ENCODE measurements at regions of chr20 and their contacts with region 1.

Region 1: GRCh38 chr20:12970372-12970821 is 38.4 kb upstream of the SPTLC3 start:
- DNase-seq: peak; percentile 32
- H3K4me3 ChIP-seq: no peak overlapping the region
- H3K27ac ChIP-seq: no peak overlapping the region
- H3K4me1 ChIP-seq: peaks cover 14% of the 10 kb centered on the region
- H3K27me3 ChIP-seq: no peaks in the 10 kb centered on the region
- CTCF ChIP-seq: peak; percentile 61 to 63

Region 2: DNA sequence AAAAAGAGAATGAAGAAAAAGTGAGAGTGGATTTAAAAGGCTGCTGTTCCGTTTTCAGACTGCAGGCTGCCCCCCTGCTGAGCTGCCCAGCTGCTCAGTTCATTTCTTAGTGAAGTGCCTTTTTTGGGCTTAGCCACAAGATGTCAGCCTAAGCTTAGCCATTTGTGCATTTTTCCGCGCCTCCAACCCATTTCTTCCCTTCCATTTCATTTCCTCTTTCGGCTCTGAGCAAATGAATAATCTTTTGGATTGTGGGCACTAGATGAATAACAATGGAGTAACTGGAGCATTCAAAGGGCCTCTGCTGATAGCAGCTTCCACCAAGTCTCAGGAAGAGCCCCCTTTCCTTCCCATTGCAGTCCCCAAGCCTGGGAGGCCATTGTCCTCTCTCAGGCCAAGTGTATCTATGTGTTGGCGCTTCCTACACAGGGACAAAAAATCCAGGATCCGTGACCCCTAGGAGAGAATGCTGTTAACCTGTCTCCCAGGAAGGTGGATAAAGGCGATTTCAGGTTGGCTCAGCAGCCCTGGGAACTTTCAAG is 45.1 kb before region 1 on chr20:
- CTCF ChIA-PET with region 1: interaction called, 8 read pairs
- dilution Hi-C with region 1: no loop called
- in situ Hi-C with region 1: loop called (anchors 5 kb)
- intact Hi-C with region 1: loop called (anchors 1 kb)
- DNase-seq: peak; percentile 73
- H3K4me3 ChIP-seq: no peak overlapping the region
- H3K27ac ChIP-seq: no peak overlapping the region
- H3K4me1 ChIP-seq: peaks cover 31% of the 10 kb centered on the region
- H3K27me3 ChIP-seq: no peaks in the 10 kb centered on the region
- CTCF ChIP-seq: peak; percentile 86 to 98

Region 3: GRCh38 chr20:13029687-13030510 is 59.5 kb after region 1 on chr20:
- CTCF ChIA-PET with region 1: no interaction called
- dilution Hi-C with region 1: loop called (anchors 5 kb)
- in situ Hi-C with region 1: no loop called
- intact Hi-C with region 1: no loop called
- DNase-seq: peak; percentile 95
- H3K4me3 ChIP-seq: peak overlapping the region in 1 of 3 experiments; percentile 5
- H3K27ac ChIP-seq: peak overlapping the region; percentile 86
- H3K4me1 ChIP-seq: peaks cover 56% of the 10 kb centered on the region
- H3K27me3 ChIP-seq: no peaks in the 10 kb centered on the region
- CTCF ChIP-seq: no peak

Region 4: DNA sequence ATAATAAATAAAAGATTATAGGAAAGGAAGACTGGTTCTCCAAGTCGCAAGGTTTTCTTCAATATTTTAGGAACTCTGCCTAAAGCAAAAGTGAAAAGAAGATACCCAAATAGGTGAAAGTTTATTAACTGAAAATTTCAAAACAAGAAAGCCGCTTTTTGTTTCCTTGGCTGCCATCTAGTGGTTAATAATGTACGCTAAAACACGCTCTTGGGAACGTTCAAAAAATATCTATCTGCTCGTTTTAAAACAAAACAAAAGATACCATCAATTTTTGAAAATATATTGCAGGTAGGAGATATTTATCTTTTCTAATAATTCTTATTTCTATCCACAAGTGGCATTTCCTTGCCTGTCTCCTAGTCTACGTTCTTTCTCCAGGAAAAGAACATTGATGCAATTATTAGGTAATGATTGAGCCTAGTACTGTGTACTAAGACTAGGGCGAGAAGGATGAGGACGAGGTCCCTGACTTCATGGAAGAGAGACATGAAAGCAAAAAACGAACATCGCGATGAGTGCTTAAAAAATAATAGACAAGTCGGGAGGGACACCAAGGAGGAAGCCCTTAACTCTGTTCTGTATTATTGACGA is 135.6 kb after region 1 on chr20:
- CTCF ChIA-PET with region 1: no interaction called
- dilution Hi-C with region 1: no loop called
- in situ Hi-C with region 1: loop called in 1 of 2 experiments (anchors 5 kb)
- intact Hi-C with region 1: loop called (anchors 1 kb)
- DNase-seq: peak; percentile 12
- H3K4me3 ChIP-seq: no peak overlapping the region
- H3K27ac ChIP-seq: no peak overlapping the region
- H3K4me1 ChIP-seq: peaks cover 3% of the 10 kb centered on the region
- H3K27me3 ChIP-seq: no peaks in the 10 kb centered on the region
- CTCF ChIP-seq: peak; percentile 62 to 65

Region 5: DNA sequence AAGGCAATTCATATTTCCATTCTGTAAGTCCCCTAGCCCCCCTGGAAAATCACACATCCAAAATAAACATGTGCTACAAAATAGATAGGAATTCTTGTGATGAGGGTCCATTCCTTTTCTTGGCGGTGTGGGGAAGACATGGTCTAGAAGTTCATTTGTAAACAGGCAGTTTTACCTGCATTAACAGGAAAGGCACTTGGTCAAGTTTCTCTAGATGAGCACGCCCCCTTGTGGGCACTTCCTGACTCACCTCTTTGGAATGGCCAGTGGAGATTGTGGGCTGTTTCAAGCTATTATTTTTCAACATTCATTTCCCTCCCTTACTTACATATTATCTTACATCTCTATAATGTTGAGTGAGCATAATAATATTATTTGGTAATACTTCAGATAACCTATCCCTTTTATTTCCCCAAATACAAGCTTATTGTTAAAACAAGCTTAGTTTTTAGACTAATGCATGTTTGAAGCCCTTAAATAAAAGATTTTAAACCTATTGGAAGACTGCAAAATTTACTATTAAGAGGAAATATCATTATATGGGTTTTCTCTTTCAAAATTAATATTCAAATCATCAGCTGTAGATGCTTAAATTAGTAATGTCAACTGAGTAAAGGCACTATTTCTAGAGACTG is 576.2 kb after region 1 on chr20:
- CTCF ChIA-PET with region 1: no interaction called
- dilution Hi-C with region 1: no loop called
- in situ Hi-C with region 1: no loop called
- intact Hi-C with region 1: loop called (anchors 5 kb)
- DNase-seq: peak; percentile 54
- H3K4me3 ChIP-seq: no peak overlapping the region
- H3K27ac ChIP-seq: no peak overlapping the region
- H3K4me1 ChIP-seq: no peaks in the 10 kb centered on the region
- H3K27me3 ChIP-seq: no peaks in the 10 kb centered on the region
- CTCF ChIP-seq: peak; percentile 69 to 76